K562 (cell line): ENCODE measurements at regions of chr1 and their contacts with region 1.

Region 1: GRCh38 chr1:3727042-3727824 is 25.0 kb upstream of the CCDC27 start:
- DNase-seq: peak; percentile 80 to 88 (median 84)
- ATAC-seq: peak; percentile 92
- H3K4me3 ChIP-seq: no peak overlapping the region
- H3K27ac ChIP-seq: no peak overlapping the region
- H3K4me1 ChIP-seq: peaks cover 0 to 52% of the 10 kb centered on the region in 2 experiments; a peak in 2 of 5 replicates
- H3K27me3 ChIP-seq: peaks cover 13 to 45% of the 10 kb centered on the region in 2 experiments; a peak in 4 of 5 replicates
- CTCF ChIP-seq: peak; percentile 79 to 91 (median 83)
- EP300 ChIP-seq: no peak
- POLR2A ChIP-seq: no peak
- RAD21 ChIP-seq: peak; percentile 23 to 64; a peak in 3 of 4 replicates

Region 2: DNA sequence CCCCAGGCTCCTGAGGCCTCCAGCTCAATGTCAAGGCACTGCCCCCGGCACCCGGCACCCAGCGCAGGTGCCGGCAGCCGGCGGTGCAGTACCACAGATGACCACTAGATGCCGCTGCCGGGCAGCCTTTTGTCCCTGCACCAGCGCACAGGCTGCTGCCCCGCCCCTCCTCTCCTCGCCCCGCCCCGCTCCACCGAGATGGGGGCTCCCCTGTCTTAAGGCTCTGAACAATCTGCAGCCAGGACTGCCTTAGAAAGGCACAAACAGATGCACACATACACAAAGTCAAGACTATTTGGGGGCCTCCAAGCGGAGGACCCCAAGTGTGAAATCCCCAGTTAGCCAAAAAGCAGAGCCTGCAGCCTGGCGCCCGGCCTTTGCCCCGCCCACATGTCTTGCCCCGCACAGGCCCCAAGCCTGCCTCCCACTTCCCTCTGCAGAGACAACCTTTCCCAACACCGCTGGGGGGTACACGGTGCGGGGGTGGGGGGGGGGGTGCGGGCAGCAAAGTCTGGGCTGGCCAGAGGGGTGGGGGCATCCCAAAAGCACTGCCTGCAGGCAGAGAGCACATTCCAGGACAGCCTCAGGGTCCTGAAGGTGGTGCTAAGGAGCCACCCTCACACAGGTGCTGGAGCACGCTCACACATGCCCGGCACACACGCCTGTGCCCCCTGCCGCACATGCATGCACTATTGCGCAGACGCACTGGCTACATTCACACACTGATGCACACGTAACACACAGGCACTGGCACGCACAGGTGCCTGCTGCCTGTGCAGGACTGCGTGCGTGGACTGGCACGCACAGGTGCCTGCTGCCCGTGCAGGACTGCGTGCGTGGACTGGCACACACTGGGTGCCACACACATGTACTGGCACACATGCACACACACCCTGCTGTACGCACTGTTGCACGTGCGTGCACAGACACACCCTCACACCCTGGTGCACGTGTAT is 235.7 kb before region 1 on chr1:
- CTCF ChIA-PET with region 1: interaction called, 9 read pairs
- POLR2A ChIA-PET with region 1: no interaction called
- in situ Hi-C with region 1: no loop called
- intact Hi-C with region 1: loop called (anchors 1 kb)
- DNase-seq: peak; percentile 79 to 97 (median 94)
- ATAC-seq: peak; percentile 94
- H3K4me3 ChIP-seq: no peak overlapping the region
- H3K27ac ChIP-seq: no peak overlapping the region
- H3K4me1 ChIP-seq: peaks cover 0 to 37% of the 10 kb centered on the region in 2 experiments; a peak in 2 of 5 replicates
- H3K27me3 ChIP-seq: peaks cover 4 to 33% of the 10 kb centered on the region in 2 experiments; a peak in 3 of 5 replicates
- CTCF ChIP-seq: peak; percentile 89 to 96 (median 94)
- EP300 ChIP-seq: no peak
- POLR2A ChIP-seq: no peak
- RAD21 ChIP-seq: peak in 1 of 2 experiments; percentile 79; a peak in 2 of 4 replicates

Region 3: DNA sequence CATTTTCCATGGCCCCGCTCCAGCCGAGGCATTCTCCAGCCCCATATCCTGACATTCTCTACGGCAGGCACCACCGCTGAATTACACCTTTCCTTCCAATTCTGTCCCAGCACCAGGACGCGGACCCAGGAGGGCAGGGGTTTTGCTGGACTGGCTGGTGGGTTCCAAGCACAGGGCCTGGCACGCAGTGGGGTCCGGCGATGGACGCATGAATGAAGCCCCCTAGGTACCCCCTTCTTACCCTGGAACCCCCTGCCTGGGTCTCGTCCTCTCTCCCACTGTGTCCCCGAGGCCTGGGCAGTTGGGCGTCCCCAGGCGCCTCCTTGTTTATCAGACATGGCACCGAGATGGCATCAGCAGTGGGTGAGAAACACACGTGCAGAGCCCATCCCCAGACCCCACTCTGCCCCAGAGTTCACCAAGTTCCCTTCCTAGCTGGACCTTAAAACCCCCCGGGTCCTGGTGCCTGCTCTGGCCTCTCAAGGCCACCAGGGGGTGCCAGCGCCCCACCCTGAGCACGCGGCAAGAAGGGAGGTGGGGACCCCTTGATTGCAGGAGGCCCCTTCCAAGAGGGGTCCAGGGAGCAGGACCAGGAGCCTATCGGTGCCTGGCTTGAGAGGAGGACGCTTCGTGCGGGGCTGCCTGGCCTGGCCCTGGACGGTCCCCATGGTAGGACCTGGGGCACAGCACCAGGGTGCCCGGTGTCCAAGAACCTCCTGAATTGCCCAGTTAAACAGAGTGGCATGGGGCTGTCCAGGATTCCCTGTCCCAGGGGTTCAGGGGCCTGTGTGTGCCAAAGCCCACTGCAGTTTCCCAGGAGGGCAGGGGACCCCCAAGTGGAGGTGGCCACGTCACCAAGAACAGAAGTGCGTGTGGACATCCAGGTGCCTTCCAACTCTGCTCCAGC is 162.1 kb before region 1 on chr1:
- CTCF ChIA-PET with region 1: interaction called, 9 read pairs
- POLR2A ChIA-PET with region 1: no interaction called
- in situ Hi-C with region 1: no loop called
- intact Hi-C with region 1: loop called (anchors 1 kb)
- DNase-seq: peak; percentile 57 to 89 (median 86)
- ATAC-seq: peak; percentile 80
- H3K4me3 ChIP-seq: no peak overlapping the region
- H3K27ac ChIP-seq: no peak overlapping the region
- H3K4me1 ChIP-seq: peaks cover 0 to 21% of the 10 kb centered on the region in 2 experiments; a peak in 1 of 5 replicates
- H3K27me3 ChIP-seq: peaks cover 20 to 63% of the 10 kb centered on the region in 2 experiments
- CTCF ChIP-seq: peak; percentile 89 to 94 (median 91)
- EP300 ChIP-seq: no peak
- POLR2A ChIP-seq: no peak
- RAD21 ChIP-seq: peak; percentile 84 to 94

Region 4: DNA sequence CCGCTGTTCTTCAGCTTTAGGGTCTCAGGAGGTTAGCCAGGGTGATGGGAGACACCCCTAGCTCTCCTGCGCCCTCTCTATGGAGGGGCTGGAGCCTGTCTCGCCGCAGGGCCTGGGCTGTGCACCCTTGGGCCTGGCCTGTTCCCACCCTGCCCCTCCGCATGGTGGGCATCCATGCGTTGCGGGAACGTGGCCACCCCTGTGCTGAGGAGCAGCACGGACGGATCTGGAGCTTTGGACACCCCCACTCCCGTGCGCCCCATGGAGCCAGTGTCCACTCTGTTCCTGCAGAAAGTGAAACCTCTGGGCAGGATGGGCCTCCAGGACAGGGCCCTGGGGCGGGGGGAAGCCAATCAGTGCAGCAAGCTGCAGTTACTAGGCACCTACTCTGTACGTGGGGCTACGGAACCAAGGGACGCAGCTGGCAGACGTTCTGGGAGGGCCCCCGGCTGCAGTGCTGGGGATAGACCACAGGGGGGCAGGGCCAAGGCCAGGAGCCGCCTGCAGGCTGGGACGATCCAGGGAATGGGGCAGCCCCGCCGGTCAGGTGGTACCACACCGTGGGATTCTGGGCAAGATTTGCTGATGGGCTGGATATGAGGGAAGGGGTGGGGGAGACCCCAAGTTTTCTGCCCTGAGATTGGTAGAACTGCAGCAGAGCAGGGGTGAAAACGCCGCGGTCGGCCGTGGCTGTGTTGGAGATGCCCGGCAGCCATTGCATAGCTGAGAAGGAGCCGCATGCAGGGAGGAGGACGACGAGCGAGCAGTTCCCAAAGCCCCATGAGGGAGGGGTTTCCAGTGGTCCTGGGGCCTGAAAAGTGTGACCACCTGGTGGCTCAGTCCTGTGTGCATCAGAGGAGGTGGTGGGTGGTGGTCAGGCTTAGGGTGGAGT is 31.7 kb before region 1 on chr1:
- CTCF ChIA-PET with region 1: no interaction called
- POLR2A ChIA-PET with region 1: interaction called, 3 read pairs
- in situ Hi-C with region 1: no loop called
- intact Hi-C with region 1: loop called (anchors 1 kb)
- DNase-seq: peak; percentile 54 to 85 (median 83)
- ATAC-seq: peak; percentile 91
- H3K4me3 ChIP-seq: no peak overlapping the region
- H3K27ac ChIP-seq: no peak overlapping the region
- H3K4me1 ChIP-seq: peaks cover 0 to 60% of the 10 kb centered on the region in 2 experiments; a peak in 2 of 5 replicates
- H3K27me3 ChIP-seq: peaks cover 50 to 75% of the 10 kb centered on the region in 2 experiments
- CTCF ChIP-seq: peak; percentile 69 to 88 (median 80)
- EP300 ChIP-seq: no peak
- POLR2A ChIP-seq: no peak
- RAD21 ChIP-seq: peak in 1 of 2 experiments; percentile 69; a peak in 3 of 4 replicates